PC-9 (cell line): ENCODE measurements at regions of chr15 and their contacts with region 1.

Region 1: GRCh38 chr15:85324202-85324601 is 56.2 kb upstream of the AKAP13 start:
- DNase-seq: no peak
- H3K4me3 ChIP-seq: no peak overlapping the region
- H3K27ac ChIP-seq: no peak overlapping the region
- H3K4me1 ChIP-seq: no peaks in the 10 kb centered on the region
- H3K27me3 ChIP-seq: no peaks in the 10 kb centered on the region
- CTCF ChIP-seq: no peak

Region 2: DNA sequence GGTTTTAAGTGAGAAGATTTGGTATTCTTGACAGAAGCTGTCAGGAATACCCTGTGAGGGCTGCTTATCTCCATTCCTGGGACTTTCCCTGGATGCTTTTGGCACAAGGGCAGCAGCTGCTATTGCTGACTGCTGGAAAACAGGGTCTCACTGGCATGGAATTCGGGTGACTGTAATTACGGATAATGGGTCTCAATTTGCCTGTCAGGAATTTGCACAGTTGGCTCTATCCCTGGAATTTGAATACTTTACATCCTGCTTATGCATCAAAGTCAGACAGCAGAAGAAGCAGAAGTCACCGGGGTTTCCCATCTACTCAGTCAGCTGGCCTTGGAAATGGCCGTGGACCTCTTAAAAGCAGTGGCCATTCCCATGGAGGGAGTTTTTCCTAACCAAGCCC is 30.3 kb after region 1 on chr15:
- CTCF ChIA-PET with region 1: no interaction called
- POLR2A ChIA-PET with region 1: interaction called, 13 read pairs
- intact Hi-C with region 1: no loop called
- DNase-seq: no peak
- H3K4me3 ChIP-seq: no peak overlapping the region
- H3K27ac ChIP-seq: no peak overlapping the region
- H3K4me1 ChIP-seq: peaks cover 41% of the 10 kb centered on the region
- H3K27me3 ChIP-seq: no peaks in the 10 kb centered on the region
- CTCF ChIP-seq: no peak